Brain microvascular endothelial cell (primary cell): ENCODE measurements at regions of chr2 and their contacts with region 1.

Region 1: DNA sequence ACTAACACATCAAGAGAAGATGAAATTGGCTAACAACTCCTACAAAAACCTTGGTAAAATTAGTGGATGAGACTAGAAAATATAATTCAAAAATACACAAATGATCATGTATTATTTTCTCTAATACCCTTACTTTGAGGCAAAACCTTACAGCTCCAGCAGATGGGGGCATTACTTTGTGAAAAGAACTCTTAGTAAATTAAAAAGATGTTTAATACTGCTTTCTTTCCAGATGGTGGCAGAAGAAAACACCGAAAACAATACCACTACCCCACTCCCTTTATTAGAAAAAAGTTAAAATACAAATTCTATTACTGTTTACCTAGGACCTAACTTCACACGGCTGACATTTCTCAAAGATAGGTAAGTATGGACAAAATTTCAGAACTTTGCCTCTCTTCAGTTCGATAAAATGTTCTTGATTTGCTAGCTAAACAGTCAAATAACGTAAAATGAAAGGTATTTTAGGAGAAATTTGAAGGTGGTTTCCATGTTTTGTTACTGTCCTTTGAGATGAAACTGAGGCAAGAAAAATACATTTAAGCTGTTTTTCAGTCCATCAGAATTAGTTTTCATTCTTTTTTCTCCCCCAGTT is 30.6 kb downstream of the ORC4 start:
- DNase-seq: peak; percentile 41
- H3K4me3 ChIP-seq: no peak overlapping the region
- H3K27ac ChIP-seq: no peak overlapping the region
- H3K27me3 ChIP-seq: no peaks in the 10 kb centered on the region
- CTCF ChIP-seq: peak; percentile 62

Region 2: DNA sequence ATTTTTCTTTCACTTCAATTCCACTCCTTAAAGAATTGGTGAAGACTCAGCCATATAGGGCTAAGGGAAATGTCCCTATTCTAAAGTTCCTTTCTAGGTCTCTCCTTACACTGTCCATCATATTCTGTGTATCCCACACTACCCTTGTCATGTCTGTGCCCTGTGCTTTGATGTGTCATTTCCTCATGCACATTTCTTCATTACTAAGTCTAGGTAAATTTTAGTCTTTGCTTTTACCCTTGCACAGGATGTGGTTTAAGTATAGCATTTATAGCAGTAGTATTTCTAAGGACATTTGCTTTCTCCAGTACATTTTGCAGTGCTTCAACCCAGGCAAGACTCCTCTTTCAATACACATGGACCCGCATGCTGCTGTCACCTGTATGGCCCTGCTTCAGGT is 366.6 kb before region 1 on chr2:
- in situ Hi-C with region 1: no loop called
- DNase-seq: no peak
- H3K4me3 ChIP-seq: no peak overlapping the region
- H3K27ac ChIP-seq: no peak overlapping the region
- H3K27me3 ChIP-seq: no peaks in the 10 kb centered on the region
- CTCF ChIP-seq: no peak

Region 3: DNA sequence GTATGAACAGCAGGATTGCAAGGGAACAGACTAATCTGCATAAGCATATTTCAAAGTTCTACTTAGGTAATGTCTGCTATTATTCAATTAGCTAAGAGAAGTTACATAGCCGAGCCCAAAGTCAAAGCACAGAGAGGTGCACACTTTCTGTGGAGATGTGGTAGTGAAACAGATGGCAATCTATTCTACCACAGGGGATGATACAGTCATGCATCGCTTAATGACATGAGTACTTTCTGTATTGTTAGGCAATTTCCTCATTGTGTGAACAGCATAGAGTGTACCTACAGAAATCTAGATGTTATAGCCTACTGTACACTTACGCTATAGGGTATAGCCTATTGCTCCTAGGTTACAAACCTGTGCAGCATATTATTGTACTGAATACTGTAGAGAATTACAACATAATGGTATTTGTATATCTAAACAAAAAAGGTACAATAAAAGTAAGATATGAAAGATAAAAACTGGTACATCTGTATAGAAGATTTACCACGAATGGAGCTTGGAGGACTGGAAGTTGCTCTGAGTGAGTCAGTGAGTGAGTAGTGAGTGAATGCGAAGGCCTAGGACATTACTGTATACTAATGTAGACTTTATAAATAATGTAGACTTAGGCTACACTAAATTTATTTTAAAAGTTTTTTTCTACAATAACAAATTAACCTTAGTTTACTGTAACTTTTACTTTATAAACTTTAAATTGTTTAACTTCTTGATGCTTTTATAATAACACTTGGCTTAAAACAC is 228.6 kb after region 1 on chr2:
- in situ Hi-C with region 1: no loop called
- DNase-seq: no peak
- H3K4me3 ChIP-seq: no peak overlapping the region
- H3K27ac ChIP-seq: no peak overlapping the region
- H3K27me3 ChIP-seq: no peaks in the 10 kb centered on the region
- CTCF ChIP-seq: no peak

Region 4: GRCh38 chr2:148989882-148990493 is 1000.1 kb after region 1 on chr2:
- in situ Hi-C with region 1: loop called (anchors 25 kb)
- DNase-seq: peak; percentile 78
- H3K4me3 ChIP-seq: no peak overlapping the region
- H3K27ac ChIP-seq: no peak overlapping the region
- H3K27me3 ChIP-seq: no peaks in the 10 kb centered on the region
- CTCF ChIP-seq: peak; percentile 74